GM12878 (cell line): ENCODE measurements at regions of chr2 and their contacts with region 1.

Region 1: DNA sequence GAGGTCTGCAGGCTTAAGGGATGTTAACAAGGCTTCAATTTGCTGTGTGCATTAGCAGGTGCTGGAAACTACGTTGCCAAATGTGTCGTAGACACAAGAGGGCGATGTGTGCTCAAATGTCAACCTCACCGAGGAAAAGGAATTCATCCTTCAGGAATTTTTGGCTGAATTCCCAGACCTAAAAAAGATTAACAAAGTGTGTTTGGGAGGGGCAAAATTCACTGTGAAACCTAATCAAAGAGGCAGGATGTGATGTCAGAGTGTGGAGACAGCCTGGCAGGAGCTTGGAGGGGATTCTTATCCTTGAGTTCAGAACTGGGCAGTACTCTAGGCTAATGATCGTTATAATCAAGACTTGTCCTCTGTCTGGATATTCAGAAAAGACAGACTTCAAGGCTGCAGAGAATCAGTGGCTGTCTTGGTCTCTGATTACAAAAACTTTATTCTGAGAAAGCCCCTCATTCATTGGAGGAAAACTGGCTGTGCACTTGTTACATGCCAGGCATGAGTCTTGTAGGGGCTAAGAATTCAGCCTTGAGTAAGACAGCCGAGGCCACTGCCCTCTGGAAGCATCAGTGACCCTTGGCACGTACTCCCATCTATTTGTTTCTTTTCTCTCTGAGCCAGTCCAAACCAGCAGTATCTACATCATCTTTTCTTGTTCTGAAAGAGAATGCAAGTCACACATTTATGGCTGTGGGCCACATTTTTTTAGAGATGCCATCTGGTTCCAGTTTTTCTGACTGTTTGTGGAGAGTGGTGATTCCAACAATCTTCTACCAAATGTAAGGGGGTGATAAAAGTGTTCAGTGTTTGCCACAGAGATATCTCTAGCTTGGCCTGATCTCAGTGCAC is 18.7 kb upstream of the SCYGR1 start:
- DNase-seq: no peak
- ATAC-seq: peak; percentile 67
- H3K4me3 ChIP-seq: no peak overlapping the region
- H3K27ac ChIP-seq: no peak overlapping the region
- H3K4me1 ChIP-seq: peaks cover 14% of the 10 kb centered on the region
- H3K27me3 ChIP-seq: no peaks in the 10 kb centered on the region
- CTCF ChIP-seq: peak; percentile 61 to 90 (median 74)
- EP300 ChIP-seq: no peak
- POLR2A ChIP-seq: no peak
- RAD21 ChIP-seq: peak; percentile 85

Region 2: GRCh38 chr2:227154986-227155774 is 251.2 kb before region 1 on chr2:
- CTCF ChIA-PET with region 1: no interaction called
- POLR2A ChIA-PET with region 1: no interaction called
- RAD21 ChIA-PET with region 1: no interaction called
- SMC1A ChIA-PET with region 1: no interaction called
- in situ Hi-C with region 1: no loop called
- intact Hi-C with region 1: no loop called
- DNase-seq: no peak
- ATAC-seq: no peak
- H3K4me3 ChIP-seq: no peak overlapping the region
- H3K27ac ChIP-seq: no peak overlapping the region
- H3K4me1 ChIP-seq: no peaks in the 10 kb centered on the region
- H3K27me3 ChIP-seq: no peaks in the 10 kb centered on the region
- CTCF ChIP-seq: no peak
- EP300 ChIP-seq: no peak
- POLR2A ChIP-seq: no peak
- RAD21 ChIP-seq: no peak

Region 3: DNA sequence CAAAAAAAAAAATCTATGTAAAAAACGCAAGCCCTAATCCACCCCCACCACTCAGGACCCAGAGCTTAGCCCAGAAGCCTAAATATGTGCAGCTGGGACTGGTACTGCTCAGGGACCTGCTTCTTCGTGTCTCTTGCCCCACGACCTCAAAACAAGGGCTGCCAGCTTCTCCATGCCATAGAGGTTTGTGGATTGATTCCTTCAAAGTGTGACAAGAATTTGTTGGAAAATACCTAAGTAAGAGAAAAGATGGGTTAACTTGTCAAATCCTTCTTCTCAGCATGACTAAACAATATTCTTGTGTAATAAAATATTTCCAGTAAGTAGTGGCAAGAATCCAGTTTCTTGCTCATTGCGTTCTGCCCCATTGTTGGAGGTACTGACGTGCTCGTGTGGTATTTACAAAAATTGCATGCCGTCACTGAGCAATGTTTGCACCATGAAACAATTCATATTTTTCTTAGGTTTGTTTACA is 17.8 kb before region 1 on chr2:
- CTCF ChIA-PET with region 1: interaction called, 23 read pairs
- POLR2A ChIA-PET with region 1: interaction called, 3 read pairs
- RAD21 ChIA-PET with region 1: interaction called, 10 read pairs
- SMC1A ChIA-PET with region 1: interaction called, 14 read pairs
- in situ Hi-C with region 1: no loop called
- intact Hi-C with region 1: no loop called
- DNase-seq: no peak
- ATAC-seq: no peak
- H3K4me3 ChIP-seq: no peak overlapping the region
- H3K27ac ChIP-seq: no peak overlapping the region
- H3K4me1 ChIP-seq: no peaks in the 10 kb centered on the region
- H3K27me3 ChIP-seq: no peaks in the 10 kb centered on the region
- CTCF ChIP-seq: no peak
- EP300 ChIP-seq: no peak
- POLR2A ChIP-seq: no peak
- RAD21 ChIP-seq: no peak

Region 4: DNA sequence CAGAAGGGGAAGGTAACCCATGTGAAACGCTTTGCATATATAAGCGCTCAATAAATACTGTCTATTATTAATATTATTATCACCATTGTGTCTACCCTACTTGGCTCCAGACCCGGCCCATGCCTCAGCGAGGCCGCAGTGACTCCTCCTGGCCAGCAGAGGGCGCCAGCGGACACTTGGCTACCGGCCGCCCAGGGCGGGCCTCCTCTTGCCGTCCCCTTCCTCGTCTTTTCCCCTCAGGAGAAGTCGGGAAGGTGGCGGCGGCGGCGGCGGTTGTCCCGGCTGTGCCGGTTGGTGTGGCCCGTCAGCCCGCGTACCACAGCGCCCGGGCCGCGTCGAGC is 65.5 kb after region 1 on chr2 and contains the start of gene AGFG1:
- CTCF ChIA-PET with region 1: interaction called, 127 read pairs
- POLR2A ChIA-PET with region 1: interaction called, 5 read pairs
- RAD21 ChIA-PET with region 1: interaction called, 61 read pairs
- SMC1A ChIA-PET with region 1: interaction called, 191 read pairs
- in situ Hi-C with region 1: no loop called
- intact Hi-C with region 1: loop called (anchors 2 kb)
- DNase-seq: no peak
- ATAC-seq: peak; percentile 81
- H3K4me3 ChIP-seq: peak within 1 kb of the TSS; percentile 83
- H3K27ac ChIP-seq: peak within 1 kb of the TSS; percentile 68
- H3K4me1 ChIP-seq: no peaks in the 10 kb centered on the region
- H3K27me3 ChIP-seq: no peaks in the 10 kb centered on the region
- CTCF ChIP-seq: peak; percentile 95 to 99 (median 98); a peak in 5 of 6 replicates
- EP300 ChIP-seq: no peak
- POLR2A ChIP-seq: peak; percentile 58
- RAD21 ChIP-seq: peak; percentile 71
- polyA plus RNA-seq, gene AGFG1: 28.6 to 53.2 TPM

Region 5: GRCh38 chr2:227528803-227529202 is 122.4 kb after region 1 on chr2:
- CTCF ChIA-PET with region 1: interaction called, 19 read pairs
- POLR2A ChIA-PET with region 1: no interaction called
- RAD21 ChIA-PET with region 1: interaction called, 3 read pairs
- SMC1A ChIA-PET with region 1: interaction called, 8 read pairs
- in situ Hi-C with region 1: no loop called
- intact Hi-C with region 1: no loop called
- DNase-seq: no peak
- ATAC-seq: no peak
- H3K4me3 ChIP-seq: no peak overlapping the region
- H3K27ac ChIP-seq: no peak overlapping the region
- H3K4me1 ChIP-seq: 0 out of 2 replicates have a peak, but pooled peaks cover under 1% of the 10 kb centered on the region
- H3K27me3 ChIP-seq: no peaks in the 10 kb centered on the region
- CTCF ChIP-seq: no peak
- EP300 ChIP-seq: no peak
- POLR2A ChIP-seq: no peak
- RAD21 ChIP-seq: no peak

Region 6: GRCh38 chr2:227566012-227566411 is 159.6 kb after region 1 on chr2:
- CTCF ChIA-PET with region 1: interaction called, 28 read pairs
- POLR2A ChIA-PET with region 1: no interaction called
- RAD21 ChIA-PET with region 1: interaction called, 5 read pairs
- SMC1A ChIA-PET with region 1: interaction called, 4 read pairs
- in situ Hi-C with region 1: no loop called
- intact Hi-C with region 1: no loop called
- DNase-seq: no peak
- ATAC-seq: peak; percentile 38; the same call in 2 of the 3 replicates
- H3K4me3 ChIP-seq: no peak overlapping the region
- H3K27ac ChIP-seq: no peak overlapping the region
- H3K4me1 ChIP-seq: no peaks in the 10 kb centered on the region
- H3K27me3 ChIP-seq: no peaks in the 10 kb centered on the region
- CTCF ChIP-seq: no peak
- EP300 ChIP-seq: no peak
- POLR2A ChIP-seq: no peak
- RAD21 ChIP-seq: no peak

Region 7: DNA sequence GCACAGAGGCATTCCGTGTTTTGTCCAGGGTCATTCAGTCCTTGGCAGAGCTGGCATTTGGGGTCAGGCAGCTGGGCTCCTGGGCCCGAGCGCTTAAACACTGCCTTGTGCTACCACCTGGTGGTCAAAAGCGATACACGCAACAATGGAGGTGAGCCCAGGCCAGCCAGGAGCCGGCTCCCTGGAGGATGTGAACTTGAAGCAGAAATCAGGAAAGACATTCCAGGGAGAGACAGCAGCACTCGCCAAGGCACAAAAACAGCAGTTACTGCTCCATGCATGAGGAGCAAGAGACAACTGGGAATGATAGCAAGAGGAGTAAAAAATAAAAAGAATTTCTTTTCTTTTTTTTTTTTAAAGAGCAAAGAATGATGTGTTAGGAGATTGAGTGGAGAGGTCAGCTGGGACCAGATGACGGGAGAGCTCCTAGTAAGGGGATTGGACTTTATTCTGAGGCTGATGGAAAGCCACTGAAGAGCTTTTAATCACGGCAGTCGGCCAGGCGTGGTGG is 360.0 kb after region 1 on chr2:
- CTCF ChIA-PET with region 1: interaction called, 82 read pairs
- POLR2A ChIA-PET with region 1: interaction called, 5 read pairs
- RAD21 ChIA-PET with region 1: interaction called, 51 read pairs
- SMC1A ChIA-PET with region 1: interaction called, 64 read pairs
- in situ Hi-C with region 1: loop called (anchors 10 kb)
- intact Hi-C with region 1: loop called (anchors 1 kb)
- DNase-seq: no peak
- ATAC-seq: peak; percentile 100
- H3K4me3 ChIP-seq: no peak overlapping the region
- H3K27ac ChIP-seq: no peak overlapping the region
- H3K4me1 ChIP-seq: no peaks in the 10 kb centered on the region
- H3K27me3 ChIP-seq: no peaks in the 10 kb centered on the region
- CTCF ChIP-seq: peak; percentile 84 to 91 (median 84)
- EP300 ChIP-seq: no peak
- POLR2A ChIP-seq: no peak
- RAD21 ChIP-seq: peak; percentile 93